Tibial artery (tissue), 4 donors: ENCODE measurements at regions of chr19 and their contacts with region 1.

Region 1: DNA sequence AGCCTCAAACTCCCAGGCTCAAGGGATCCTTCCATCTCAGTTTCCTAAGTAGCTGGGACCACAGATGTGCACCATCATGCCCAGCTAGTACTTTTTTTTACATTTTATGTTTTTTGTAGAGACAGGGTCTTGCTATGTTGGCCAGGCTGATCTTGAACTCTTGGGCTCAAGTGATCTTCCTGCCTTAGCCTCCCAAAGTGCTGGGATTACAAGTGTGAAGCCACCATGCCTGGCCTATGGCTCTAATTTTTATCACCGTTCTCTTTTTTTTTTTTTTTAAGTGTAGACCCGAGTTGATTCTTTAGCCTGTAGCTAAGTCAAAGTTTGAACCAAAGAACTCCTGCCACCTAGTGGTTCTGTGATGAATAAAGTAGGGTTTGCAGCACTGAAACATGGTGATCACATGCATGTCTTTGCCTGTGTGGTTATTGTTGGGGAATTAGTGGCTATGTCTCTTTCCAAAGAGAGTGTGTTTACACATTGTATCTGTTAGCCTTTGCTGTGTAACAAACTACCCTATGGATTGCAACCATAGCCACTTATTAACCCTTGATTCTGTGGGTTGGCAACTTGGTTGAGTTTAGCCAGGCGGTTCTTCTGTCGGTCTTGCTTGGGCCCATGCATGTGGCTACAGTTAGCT is 11.6 kb downstream of the NFILZ start:
- DNase-seq: no peak
- H3K4me3 ChIP-seq: no peak overlapping the region
- H3K27ac ChIP-seq: no peak overlapping the region
- H3K4me1 ChIP-seq: peaks cover 0 to 25% (median 3%) of the 10 kb centered on the region in 4 donors
- H3K27me3 ChIP-seq: no peaks in the 10 kb centered on the region
- CTCF ChIP-seq: peak; percentile 57 to 65

Region 2: GRCh38 chr19:8261347-8262310 is 380.4 kb before region 1 on chr19:
- intact Hi-C with region 1: loop called (anchors 10 kb)
- DNase-seq: peak in 1 of 2 donors; percentile 59
- H3K4me3 ChIP-seq: no peak overlapping the region
- H3K27ac ChIP-seq: no peak overlapping the region
- H3K4me1 ChIP-seq: no peaks in the 10 kb centered on the region
- H3K27me3 ChIP-seq: peaks cover 0 to 6% of the 10 kb centered on the region in 2 donors
- CTCF ChIP-seq: no peak

Region 3: GRCh38 chr19:8580710-8581281 is 61.2 kb before region 1 on chr19:
- intact Hi-C with region 1: loop called (anchors 5 kb)
- DNase-seq: peak; percentile 81 to 87
- H3K4me3 ChIP-seq: no peak overlapping the region
- H3K27ac ChIP-seq: no peak overlapping the region
- H3K4me1 ChIP-seq: peaks cover 0 to 11% (median 6%) of the 10 kb centered on the region in 4 donors
- H3K27me3 ChIP-seq: peaks cover 0 to 21% of the 10 kb centered on the region in 2 donors
- CTCF ChIP-seq: peak; percentile 99

Region 4: GRCh38 chr19:8681345-8682029 is 39.5 kb after region 1 on chr19:
- intact Hi-C with region 1: no loop called
- DNase-seq: no peak
- H3K4me3 ChIP-seq: no peak overlapping the region
- H3K27ac ChIP-seq: no peak overlapping the region
- H3K4me1 ChIP-seq: no peaks in the 10 kb centered on the region
- H3K27me3 ChIP-seq: peaks cover 0 to 17% of the 10 kb centered on the region in 2 donors
- CTCF ChIP-seq: no peak